A549 (cell line): ENCODE measurements at regions of chr1 and their contacts with region 1.

Region 1: DNA sequence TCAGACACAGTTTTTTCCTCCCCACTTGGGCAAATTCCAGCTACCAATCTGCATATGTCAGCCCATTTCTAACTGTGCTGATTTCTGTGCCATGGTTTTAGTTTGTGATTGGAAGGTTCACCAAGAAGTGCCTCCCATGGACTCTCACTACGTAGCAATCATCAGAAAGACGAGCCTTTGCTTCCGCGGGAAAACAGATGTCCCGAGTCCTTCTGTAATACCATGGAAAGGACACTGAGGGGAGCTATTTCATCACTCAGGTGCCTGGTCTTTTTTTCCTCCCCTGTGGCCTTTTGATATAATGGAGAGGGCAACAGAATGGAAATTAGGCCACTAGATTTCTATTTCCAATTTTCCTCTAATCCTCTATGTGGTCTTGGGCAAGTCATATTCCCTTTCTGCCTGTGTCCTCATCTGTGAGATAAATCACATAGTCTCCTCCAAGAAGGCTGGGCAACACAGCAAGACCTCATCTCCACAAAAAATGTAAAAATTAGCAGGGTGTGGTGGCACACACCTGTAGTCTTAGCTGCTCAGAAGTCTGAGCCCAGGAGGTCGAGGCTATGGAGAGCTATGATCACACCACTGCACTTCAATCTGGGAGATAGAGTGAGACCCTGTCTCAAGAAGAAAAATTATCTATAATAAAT is 24.8 kb downstream of the LEMD1 start:
- DNase-seq: peak; percentile 61 to 67
- ATAC-seq: peak; percentile 68 to 85; a peak in 5 of 6 replicates
- H3K4me3 ChIP-seq: no peak overlapping the region
- H3K27ac ChIP-seq: no peak overlapping the region
- H3K4me1 ChIP-seq: no peaks in the 10 kb centered on the region
- CTCF ChIP-seq: peak; percentile 71
- EP300 ChIP-seq: no peak
- POLR2A ChIP-seq: no peak
- RAD21 ChIP-seq: peak; percentile 81 to 89

Region 2: DNA sequence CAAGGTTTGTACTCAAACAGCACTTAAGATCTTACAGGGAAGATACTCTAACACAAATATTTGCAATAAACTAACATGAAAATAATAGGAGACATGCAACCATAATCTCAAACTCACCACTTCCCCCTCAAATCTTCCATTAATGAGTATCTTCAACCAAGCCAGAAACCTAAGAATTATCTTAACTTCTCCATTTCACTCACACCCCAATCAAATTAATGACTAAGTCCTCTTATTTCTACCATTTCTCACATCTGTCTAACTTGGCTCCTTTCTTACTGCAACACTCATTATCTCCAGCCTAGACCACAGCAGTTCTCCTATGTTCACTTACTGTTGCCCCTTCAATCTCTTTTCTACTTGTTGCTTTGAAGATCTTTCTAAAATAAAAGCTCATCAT is 285.7 kb before region 1 on chr1:
- CTCF ChIA-PET with region 1: no interaction called
- POLR2A ChIA-PET with region 1: no interaction called
- DNase-seq: no peak
- ATAC-seq: no peak
- H3K4me3 ChIP-seq: no peak overlapping the region
- H3K27ac ChIP-seq: no peak overlapping the region
- H3K4me1 ChIP-seq: no peaks in the 10 kb centered on the region
- CTCF ChIP-seq: no peak
- EP300 ChIP-seq: no peak
- POLR2A ChIP-seq: no peak
- RAD21 ChIP-seq: no peak

Region 3: GRCh38 chr1:205335643-205336091 is 61.4 kb before region 1 on chr1:
- CTCF ChIA-PET with region 1: interaction called, 17 read pairs
- POLR2A ChIA-PET with region 1: no interaction called
- DNase-seq: peak; percentile 89 to 90
- ATAC-seq: peak; percentile 91 to 97
- H3K4me3 ChIP-seq: no peak overlapping the region
- H3K27ac ChIP-seq: no peak overlapping the region
- H3K4me1 ChIP-seq: peaks cover under 1% of the 10 kb centered on the region; the same call in 1 of the 3 replicates
- CTCF ChIP-seq: peak; percentile 99
- EP300 ChIP-seq: no peak
- POLR2A ChIP-seq: no peak
- RAD21 ChIP-seq: peak; percentile 88 to 92

Region 4: GRCh38 chr1:205382561-205382960 is 14.5 kb before region 1 on chr1:
- CTCF ChIA-PET with region 1: interaction called, 17 read pairs
- POLR2A ChIA-PET with region 1: no interaction called
- DNase-seq: no peak
- ATAC-seq: no peak
- H3K4me3 ChIP-seq: no peak overlapping the region
- H3K27ac ChIP-seq: no peak overlapping the region
- H3K4me1 ChIP-seq: no peaks in the 10 kb centered on the region
- CTCF ChIP-seq: no peak
- EP300 ChIP-seq: no peak
- POLR2A ChIP-seq: no peak
- RAD21 ChIP-seq: no peak

Region 5: DNA sequence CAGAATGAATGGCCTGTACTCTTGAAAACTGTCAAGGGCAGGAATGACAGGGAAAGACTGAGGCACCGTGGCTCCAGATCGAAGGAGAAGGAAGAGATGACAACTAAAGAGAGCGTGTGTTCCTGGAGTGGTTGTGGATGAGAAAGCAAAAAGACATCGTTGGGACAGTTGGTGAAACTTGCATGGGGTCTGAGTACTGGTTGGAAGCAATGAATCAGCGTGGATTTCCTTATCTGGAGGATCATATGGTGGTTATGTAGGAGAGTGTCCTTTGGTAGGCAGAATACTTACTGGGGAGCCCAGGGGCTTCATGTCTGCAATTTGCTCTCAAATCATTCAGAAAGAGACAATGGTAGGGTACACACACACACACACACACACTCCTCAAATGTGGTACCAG is 10.9 kb after region 1 on chr1:
- CTCF ChIA-PET with region 1: interaction called, 11 read pairs
- POLR2A ChIA-PET with region 1: no interaction called
- DNase-seq: no peak
- ATAC-seq: no peak
- H3K4me3 ChIP-seq: no peak overlapping the region
- H3K27ac ChIP-seq: no peak overlapping the region
- H3K4me1 ChIP-seq: no peaks in the 10 kb centered on the region
- CTCF ChIP-seq: no peak
- EP300 ChIP-seq: no peak
- POLR2A ChIP-seq: no peak
- RAD21 ChIP-seq: no peak

Region 6: DNA sequence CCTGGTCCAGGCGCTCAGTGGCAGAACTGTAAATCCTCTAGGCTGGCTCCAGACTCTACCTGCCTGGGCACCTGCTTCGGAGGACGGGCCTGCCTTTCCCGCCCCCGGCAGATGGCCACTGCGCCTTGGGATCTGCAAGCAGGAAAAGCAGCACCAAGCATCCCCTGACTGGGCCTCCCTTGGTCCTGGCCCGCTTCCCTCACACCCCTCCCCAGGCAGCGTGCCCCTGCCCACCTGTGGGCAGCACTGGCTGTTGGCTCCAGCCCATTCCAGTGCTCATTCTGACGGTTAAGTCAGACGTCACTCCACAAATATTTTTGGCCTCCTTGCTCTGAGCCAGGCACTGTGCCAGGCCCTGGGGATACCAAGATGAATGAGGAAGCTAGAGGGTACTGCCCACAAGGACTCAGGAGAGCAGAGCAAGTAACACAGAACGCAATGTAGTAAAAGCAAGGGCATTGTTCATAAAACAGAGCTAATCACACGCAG is 80.7 kb after region 1 on chr1:
- CTCF ChIA-PET with region 1: interaction called, 16 read pairs
- POLR2A ChIA-PET with region 1: no interaction called
- DNase-seq: peak; percentile 52 to 84
- ATAC-seq: peak; percentile 49 to 84
- H3K4me3 ChIP-seq: no peak overlapping the region
- H3K27ac ChIP-seq: peak overlapping the region; percentile 58 to 66; a peak in 4 of 6 replicates
- H3K4me1 ChIP-seq: peaks cover 17% of the 10 kb centered on the region
- CTCF ChIP-seq: no peak
- EP300 ChIP-seq: no peak
- POLR2A ChIP-seq: no peak
- RAD21 ChIP-seq: no peak

Region 7: DNA sequence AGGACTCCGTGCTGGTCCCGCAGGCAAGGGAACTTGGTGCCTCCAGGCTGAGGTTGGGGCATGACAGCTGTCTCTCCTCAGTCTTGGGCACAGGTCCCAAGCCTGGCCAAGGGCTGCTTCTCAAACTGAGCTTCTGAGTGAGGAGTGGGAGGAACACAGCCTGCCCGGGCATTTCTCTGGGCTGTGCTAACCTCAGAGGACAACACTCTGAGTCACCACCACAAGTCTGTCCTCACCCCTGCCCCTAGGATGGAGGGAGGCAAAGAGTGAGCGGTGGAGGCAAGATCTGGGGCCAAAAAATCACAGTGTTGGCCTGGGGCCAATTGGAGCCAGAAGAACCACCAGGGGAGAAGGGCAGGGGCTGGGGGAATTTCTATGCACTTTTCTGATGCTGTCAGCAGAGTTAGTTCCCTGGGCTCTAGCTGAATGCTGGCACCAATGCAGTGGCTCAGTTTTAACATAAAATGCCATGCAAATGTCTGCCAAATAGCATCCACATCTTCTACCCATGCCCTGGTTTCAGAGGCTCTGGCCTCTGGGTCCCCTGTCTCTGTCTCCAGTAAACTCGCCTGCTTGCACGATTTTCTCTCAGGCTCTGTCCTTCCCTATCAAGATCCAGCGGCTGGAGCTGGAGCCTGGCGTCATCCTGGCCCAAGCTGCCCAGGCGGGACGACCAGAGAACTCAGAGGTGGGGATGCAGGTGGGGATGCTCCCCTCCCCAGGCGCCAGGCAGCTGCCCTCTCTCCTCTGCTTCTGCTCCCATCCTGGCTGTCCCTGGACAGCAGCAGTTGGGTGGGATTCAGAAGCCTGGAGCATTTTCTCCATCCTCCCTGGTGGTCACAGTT is 96.4 kb after region 1 on chr1:
- CTCF ChIA-PET with region 1: interaction called, 94 read pairs
- POLR2A ChIA-PET with region 1: no interaction called
- DNase-seq: no peak
- ATAC-seq: peak; percentile 48 to 69; a peak in 3 of 6 replicates
- H3K4me3 ChIP-seq: no peak overlapping the region
- H3K27ac ChIP-seq: peak overlapping the region; percentile 19 to 53; a peak in 4 of 6 replicates
- H3K4me1 ChIP-seq: peaks cover 9% of the 10 kb centered on the region
- CTCF ChIP-seq: no peak
- EP300 ChIP-seq: no peak
- POLR2A ChIP-seq: no peak
- RAD21 ChIP-seq: no peak

Region 8: DNA sequence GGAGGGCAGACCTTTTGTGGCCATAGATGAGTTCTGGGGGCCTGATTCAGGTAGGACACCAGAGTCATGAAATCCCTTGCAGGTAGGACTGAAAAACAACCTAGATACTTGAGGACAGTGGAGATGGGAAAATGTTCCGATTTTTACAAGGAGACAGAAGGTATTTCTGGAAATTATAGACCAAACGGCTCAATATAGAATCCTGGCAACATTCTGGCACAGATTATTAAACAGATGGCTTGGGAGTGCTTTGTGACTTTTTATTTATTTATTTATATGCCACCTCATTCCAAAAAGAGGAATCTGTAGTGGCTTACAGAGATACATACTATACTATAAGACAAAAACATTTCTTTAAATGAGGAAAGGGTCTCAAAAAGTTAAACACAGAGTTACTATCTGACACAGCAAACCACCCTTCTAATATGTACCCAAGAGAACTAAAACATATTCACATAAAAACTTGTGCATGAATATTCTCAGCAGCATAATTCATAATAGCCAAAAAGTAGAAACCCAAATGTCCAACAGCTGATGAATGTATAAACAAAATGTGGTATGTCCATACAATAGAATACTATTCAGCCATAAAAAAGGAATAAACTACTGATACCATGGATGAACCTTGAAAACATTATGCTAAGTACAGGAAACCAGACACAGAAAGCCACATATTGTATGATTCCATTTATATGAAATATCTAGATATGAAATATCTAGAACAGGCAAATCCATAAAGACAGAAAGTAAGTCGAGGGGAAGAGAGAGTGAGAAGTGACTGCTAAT is 157.1 kb after region 1 on chr1:
- CTCF ChIA-PET with region 1: no interaction called
- POLR2A ChIA-PET with region 1: no interaction called
- DNase-seq: no peak
- ATAC-seq: no peak
- H3K4me3 ChIP-seq: no peak overlapping the region
- H3K27ac ChIP-seq: no peak overlapping the region
- H3K4me1 ChIP-seq: no peaks in the 10 kb centered on the region
- CTCF ChIP-seq: no peak
- EP300 ChIP-seq: no peak
- POLR2A ChIP-seq: no peak
- RAD21 ChIP-seq: no peak